ENCODE measurements at regions of chr1 and their contacts with region 1.

Region 1: DNA sequence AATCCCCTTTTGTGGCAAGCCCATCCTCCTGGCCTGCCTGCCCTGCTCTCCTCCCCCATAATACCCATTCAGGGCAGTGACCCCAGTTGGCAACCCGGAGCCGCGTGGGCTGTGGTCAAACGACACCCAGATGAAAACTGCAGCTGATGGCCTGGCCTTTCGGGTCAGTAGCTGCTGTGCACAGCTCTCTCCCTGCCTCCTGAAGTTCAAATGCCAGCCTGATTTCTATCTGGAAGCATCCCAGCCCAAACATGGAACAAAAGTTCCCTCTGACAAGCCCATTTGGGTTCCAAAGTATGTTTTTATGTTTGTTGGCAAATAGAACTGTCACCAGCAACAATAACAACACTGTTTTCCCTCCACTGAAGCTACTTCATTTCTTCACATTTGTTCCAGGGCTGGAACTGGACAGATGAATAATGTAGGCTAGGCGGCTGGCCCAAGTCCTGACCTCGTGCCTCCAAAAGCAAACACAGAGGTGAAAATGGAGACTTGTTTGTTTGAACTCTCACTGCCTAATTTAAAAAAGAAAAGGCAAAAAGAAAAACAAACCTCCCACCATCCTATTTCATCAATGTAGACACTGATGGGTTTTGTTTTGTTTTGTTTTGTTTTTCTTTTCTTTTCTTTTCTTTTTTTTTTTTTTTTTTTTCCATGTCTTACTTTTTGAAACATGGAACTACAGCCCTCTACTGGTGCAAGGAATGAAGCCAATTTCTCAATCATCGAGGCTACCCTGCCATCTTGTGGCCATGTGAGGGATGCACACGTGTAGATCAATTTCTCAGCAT is 179.0 kb downstream of the ADSS2 start:
- DNase-seq: peak; percentile 77
- H3K4me3 ChIP-seq: no peak overlapping the region
- H3K27ac ChIP-seq: no peak overlapping the region
- H3K4me1 ChIP-seq: no peaks in the 10 kb centered on the region
- CTCF ChIP-seq: peak; percentile 100

Region 2: GRCh38 chr1:243294723-243295121 is 977.9 kb before region 1 on chr1:
- CTCF ChIA-PET with region 1: no interaction called
- POLR2A ChIA-PET with region 1: interaction called, 10 read pairs
- intact Hi-C with region 1: no loop called
- DNase-seq: no peak
- H3K4me3 ChIP-seq: no peak overlapping the region
- H3K27ac ChIP-seq: no peak overlapping the region
- H3K4me1 ChIP-seq: no peaks in the 10 kb centered on the region
- CTCF ChIP-seq: no peak

Region 3: GRCh38 chr1:243343970-243344937 is 928.4 kb before region 1 on chr1:
- CTCF ChIA-PET with region 1: no interaction called
- POLR2A ChIA-PET with region 1: no interaction called
- intact Hi-C with region 1: loop called (anchors 2 kb)
- DNase-seq: peak; percentile 63
- H3K4me3 ChIP-seq: no peak overlapping the region
- H3K27ac ChIP-seq: no peak overlapping the region
- H3K4me1 ChIP-seq: no peaks in the 10 kb centered on the region
- CTCF ChIP-seq: peak; percentile 91

Region 4: DNA sequence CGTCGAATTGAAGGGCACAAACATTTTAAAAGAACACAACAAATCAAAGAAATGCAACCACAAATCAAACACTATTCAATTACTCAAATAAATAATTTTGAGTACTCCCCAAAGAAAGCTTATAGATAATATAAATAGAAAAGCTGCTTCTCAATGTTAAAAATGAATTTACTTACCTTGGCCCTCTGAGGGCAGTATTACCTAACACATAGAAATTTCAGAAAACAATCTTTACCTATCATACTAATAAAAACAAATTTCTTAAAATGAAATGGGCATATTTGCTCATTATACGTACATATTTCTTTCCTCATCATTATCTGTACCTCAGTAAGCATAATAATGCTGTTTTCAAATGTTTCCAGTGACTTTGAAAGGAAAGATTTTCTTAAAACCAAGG is 564.5 kb before region 1 on chr1:
- CTCF ChIA-PET with region 1: no interaction called
- POLR2A ChIA-PET with region 1: no interaction called
- intact Hi-C with region 1: loop called (anchors 1 kb)
- DNase-seq: no peak
- H3K4me3 ChIP-seq: no peak overlapping the region
- H3K27ac ChIP-seq: no peak overlapping the region
- H3K4me1 ChIP-seq: no peaks in the 10 kb centered on the region
- CTCF ChIP-seq: peak; percentile 63

Region 5: GRCh38 chr1:243748706-243749283 is 523.9 kb before region 1 on chr1:
- CTCF ChIA-PET with region 1: no interaction called
- POLR2A ChIA-PET with region 1: no interaction called
- intact Hi-C with region 1: loop called (anchors 2 kb)
- DNase-seq: peak; percentile 68
- H3K4me3 ChIP-seq: no peak overlapping the region
- H3K27ac ChIP-seq: no peak overlapping the region
- H3K4me1 ChIP-seq: no peaks in the 10 kb centered on the region
- CTCF ChIP-seq: peak; percentile 86

Region 6: GRCh38 chr1:244047621-244048471 is 224.8 kb before region 1 on chr1:
- CTCF ChIA-PET with region 1: no interaction called
- POLR2A ChIA-PET with region 1: no interaction called
- intact Hi-C with region 1: loop called (anchors 10 kb)
- DNase-seq: no peak
- H3K4me3 ChIP-seq: peak overlapping the region; percentile 81
- H3K27ac ChIP-seq: peak overlapping the region; percentile 71
- H3K4me1 ChIP-seq: peaks cover 41% of the 10 kb centered on the region
- CTCF ChIP-seq: no peak